ENCODE measurements at regions of chr13 and their contacts with region 1.

Region 1: GRCh38 chr13:31909864-31910551 is 121.6 kb upstream of the FRY start:
- DNase-seq: peak; percentile 20 to 63 (median 46)
- H3K4me3 ChIP-seq: no peak overlapping the region
- H3K27ac ChIP-seq: no peak overlapping the region
- H3K4me1 ChIP-seq: peaks cover 4% of the 10 kb centered on the region
- H3K27me3 ChIP-seq: no peaks in the 10 kb centered on the region
- CTCF ChIP-seq: peak; percentile 73 to 77 (median 77)
- EP300 ChIP-seq: no peak
- POLR2A ChIP-seq: no peak

Region 2: DNA sequence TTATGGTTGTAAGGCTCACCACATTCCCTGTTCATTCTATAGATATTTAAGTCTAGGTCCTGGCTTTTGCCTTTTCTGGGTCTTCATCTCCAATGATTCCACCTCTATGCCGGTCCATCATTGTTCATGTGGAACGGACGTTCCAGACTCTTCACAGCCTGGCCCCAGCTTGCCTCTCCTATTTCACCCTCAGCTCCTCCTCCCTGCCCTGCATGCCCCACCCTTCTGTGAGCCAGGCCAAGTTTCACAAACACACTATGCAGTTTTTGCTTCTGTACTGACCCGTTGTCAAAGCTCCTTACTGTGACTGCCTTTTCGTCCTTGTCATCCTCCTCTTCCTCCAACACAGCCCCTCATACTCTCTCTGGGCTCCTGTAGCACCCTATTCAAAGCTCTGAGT is 946.2 kb before region 1 on chr13:
- intact Hi-C with region 1: no loop called
- DNase-seq: no peak
- H3K4me3 ChIP-seq: no peak overlapping the region
- H3K27ac ChIP-seq: no peak overlapping the region
- H3K4me1 ChIP-seq: no peaks in the 10 kb centered on the region
- H3K27me3 ChIP-seq: no peaks in the 10 kb centered on the region
- CTCF ChIP-seq: no peak
- EP300 ChIP-seq: no peak
- POLR2A ChIP-seq: no peak

Region 3: DNA sequence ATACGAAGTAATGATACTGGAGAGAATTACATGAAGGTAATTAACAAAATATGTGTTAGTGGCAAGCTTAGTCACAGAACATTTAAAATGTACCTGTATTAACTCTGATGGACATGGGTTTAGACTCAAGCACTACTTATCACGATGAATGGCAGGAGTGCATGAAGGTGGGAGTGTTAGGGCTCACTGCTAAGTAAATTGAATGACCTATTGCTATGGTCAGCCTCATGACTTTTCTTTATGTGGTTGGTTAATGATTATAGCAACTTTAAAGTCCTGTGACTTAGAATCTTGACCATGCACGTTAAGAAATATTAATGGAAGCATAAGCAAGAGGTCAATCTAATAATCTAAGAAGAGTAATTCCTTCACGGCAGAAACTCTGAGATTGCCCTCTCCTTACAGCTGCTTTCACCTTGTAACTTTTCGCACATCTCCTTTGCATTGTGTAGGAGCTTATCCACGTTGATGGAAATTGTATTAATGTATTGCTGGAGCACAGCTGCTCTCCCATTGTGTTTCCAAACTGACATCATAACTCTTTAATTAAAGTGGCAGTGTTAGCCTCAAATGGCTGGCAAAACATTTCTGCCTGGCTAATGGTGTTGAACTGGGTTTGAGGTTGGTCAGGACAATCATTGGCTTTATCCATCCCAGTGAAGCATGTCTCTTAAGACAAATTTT is 56.2 kb before region 1 on chr13:
- intact Hi-C with region 1: no loop called
- DNase-seq: no peak
- H3K4me3 ChIP-seq: no peak overlapping the region
- H3K27ac ChIP-seq: no peak overlapping the region
- H3K4me1 ChIP-seq: peaks cover 2% of the 10 kb centered on the region
- H3K27me3 ChIP-seq: no peaks in the 10 kb centered on the region
- CTCF ChIP-seq: no peak
- EP300 ChIP-seq: no peak
- POLR2A ChIP-seq: no peak

Region 4: DNA sequence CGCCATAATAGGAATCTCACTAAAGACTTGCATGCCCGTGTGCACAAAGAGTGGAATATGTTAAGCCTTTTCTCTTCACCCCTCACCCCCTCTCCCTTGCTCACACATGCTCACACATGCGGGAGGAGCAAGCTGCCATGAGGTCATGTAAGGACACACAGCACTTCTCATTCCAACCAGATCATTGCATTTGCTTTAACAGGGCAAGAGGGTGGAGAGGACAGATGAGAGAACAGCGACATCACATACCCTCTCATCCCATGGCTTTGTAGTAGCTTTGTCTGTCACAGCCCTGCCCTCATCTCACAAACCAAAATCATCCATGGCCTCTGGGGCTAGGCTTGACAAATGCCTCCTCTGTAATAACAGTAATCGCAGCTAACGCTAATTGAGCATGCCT is 24.0 kb before region 1 on chr13:
- intact Hi-C with region 1: no loop called
- DNase-seq: no peak
- H3K4me3 ChIP-seq: no peak overlapping the region
- H3K27ac ChIP-seq: no peak overlapping the region
- H3K4me1 ChIP-seq: peaks cover 12% of the 10 kb centered on the region
- H3K27me3 ChIP-seq: no peaks in the 10 kb centered on the region
- CTCF ChIP-seq: no peak
- EP300 ChIP-seq: no peak
- POLR2A ChIP-seq: no peak

Region 5: GRCh38 chr13:31998131-31998530 is 88.1 kb after region 1 on chr13:
- intact Hi-C with region 1: loop called in 1 of 4 experiments (anchors 10 kb)
- DNase-seq: no peak
- H3K4me3 ChIP-seq: no peak overlapping the region
- H3K27ac ChIP-seq: no peak overlapping the region
- H3K4me1 ChIP-seq: no peaks in the 10 kb centered on the region
- H3K27me3 ChIP-seq: no peaks in the 10 kb centered on the region
- CTCF ChIP-seq: no peak
- EP300 ChIP-seq: no peak
- POLR2A ChIP-seq: no peak

Region 6: DNA sequence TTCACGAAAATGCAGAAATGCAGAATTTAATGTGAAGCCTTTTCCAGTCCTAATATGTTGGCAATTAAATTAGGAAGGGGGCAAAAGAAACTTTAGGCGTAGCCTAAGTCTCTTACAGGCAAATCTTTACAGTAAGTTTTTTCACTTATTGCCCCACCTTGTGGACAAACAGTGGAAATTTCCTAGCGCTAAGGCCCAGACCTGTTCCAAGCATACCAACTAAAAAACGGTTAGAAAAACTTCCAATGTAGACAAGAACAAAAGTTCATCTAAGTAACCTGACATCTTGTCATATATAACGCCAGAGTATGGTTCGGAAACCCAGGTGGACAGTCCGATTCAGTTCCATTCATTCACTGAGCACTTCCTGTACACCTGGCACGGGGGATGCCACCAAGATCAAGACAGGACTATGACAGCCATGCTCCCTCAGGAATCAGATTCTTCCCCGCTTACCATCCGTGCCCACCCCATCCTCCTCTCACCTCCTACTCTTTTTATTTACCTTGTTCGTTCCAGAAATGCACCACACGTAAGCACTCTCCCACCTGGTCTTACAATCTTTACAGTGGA is 400.2 kb after region 1 on chr13:
- intact Hi-C with region 1: loop called in 3 of 4 experiments (anchors 5 to 10 kb)
- DNase-seq: no peak
- H3K4me3 ChIP-seq: peak overlapping the region; percentile 11
- H3K27ac ChIP-seq: no peak overlapping the region
- H3K4me1 ChIP-seq: peaks cover 5% of the 10 kb centered on the region
- H3K27me3 ChIP-seq: no peaks in the 10 kb centered on the region
- CTCF ChIP-seq: peak; percentile 55 to 75 (median 69)
- EP300 ChIP-seq: no peak
- POLR2A ChIP-seq: no peak

Region 7: DNA sequence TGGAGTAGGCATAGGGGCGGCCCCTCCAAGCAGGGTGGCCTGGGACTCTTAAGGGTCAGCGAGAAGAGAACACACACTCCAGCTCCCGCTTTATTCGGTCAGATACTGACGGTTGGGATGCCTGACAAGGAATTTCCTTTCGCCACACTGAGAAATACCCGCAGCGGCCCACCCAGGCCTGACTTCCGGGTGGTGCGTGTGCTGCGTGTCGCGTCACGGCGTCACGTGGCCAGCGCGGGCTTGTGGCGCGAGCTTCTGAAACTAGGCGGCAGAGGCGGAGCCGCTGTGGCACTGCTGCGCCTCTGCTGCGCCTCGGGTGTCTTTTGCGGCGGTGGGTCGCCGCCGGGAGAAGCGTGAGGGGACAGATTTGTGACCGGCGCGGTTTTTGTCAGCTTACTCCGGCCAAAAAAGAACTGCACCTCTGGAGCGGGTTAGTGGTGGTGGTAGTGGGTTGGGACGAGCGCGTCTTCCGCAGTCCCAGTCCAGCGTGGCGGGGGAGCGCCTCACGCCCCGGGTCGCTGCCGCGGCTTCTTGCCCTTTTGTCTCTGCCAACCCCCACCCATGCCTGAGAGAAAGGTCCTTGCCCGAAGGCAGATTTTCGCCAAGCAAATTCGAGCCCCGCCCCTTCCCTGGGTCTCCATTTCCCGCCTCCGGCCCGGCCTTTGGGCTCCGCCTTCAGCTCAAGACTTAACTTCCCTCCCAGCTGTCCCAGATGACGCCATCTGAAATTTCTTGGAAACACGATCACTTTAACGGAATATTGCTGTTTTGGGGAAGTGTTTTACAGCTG is 405.4 kb after region 1 on chr13 and contains the starts of genes BRCA2 and ZAR1L:
- intact Hi-C with region 1: loop called in 3 of 4 experiments (anchors 5 to 10 kb)
- DNase-seq: peak; percentile 79 to 92 (median 87)
- H3K4me3 ChIP-seq: peak within 1 kb of the TSS; percentile 77
- H3K27ac ChIP-seq: peak within 1 kb of the TSS; percentile 45 to 87
- H3K4me1 ChIP-seq: peaks cover 5% of the 10 kb centered on the region
- H3K27me3 ChIP-seq: no peaks in the 10 kb centered on the region
- CTCF ChIP-seq: no peak
- EP300 ChIP-seq: no peak
- POLR2A ChIP-seq: peak; percentile 34
- total RNA-seq, gene BRCA2: 0.36 to 3.3 (median 1.00) TPM
- total RNA-seq, gene ZAR1L: not detected

Measured in ovary (tissue), 10 donors.